ENCODE measurements at regions of chr16 and their contacts with region 1.

Region 1: GRCh38 chr16:23678430-23679273 is at the start of gene PLK1:
- DNase-seq: peak; percentile 97
- H3K4me3 ChIP-seq: peak within 1 kb of the TSS; percentile 88
- H3K27ac ChIP-seq: peak within 1 kb of the TSS; percentile 89
- H3K4me1 ChIP-seq: peaks cover 27% of the 10 kb centered on the region
- H3K27me3 ChIP-seq: no peaks in the 10 kb centered on the region
- CTCF ChIP-seq: peak; percentile 55
- total RNA-seq, gene PLK1: 227 and 234 TPM in 2 replicates

Region 2: DNA sequence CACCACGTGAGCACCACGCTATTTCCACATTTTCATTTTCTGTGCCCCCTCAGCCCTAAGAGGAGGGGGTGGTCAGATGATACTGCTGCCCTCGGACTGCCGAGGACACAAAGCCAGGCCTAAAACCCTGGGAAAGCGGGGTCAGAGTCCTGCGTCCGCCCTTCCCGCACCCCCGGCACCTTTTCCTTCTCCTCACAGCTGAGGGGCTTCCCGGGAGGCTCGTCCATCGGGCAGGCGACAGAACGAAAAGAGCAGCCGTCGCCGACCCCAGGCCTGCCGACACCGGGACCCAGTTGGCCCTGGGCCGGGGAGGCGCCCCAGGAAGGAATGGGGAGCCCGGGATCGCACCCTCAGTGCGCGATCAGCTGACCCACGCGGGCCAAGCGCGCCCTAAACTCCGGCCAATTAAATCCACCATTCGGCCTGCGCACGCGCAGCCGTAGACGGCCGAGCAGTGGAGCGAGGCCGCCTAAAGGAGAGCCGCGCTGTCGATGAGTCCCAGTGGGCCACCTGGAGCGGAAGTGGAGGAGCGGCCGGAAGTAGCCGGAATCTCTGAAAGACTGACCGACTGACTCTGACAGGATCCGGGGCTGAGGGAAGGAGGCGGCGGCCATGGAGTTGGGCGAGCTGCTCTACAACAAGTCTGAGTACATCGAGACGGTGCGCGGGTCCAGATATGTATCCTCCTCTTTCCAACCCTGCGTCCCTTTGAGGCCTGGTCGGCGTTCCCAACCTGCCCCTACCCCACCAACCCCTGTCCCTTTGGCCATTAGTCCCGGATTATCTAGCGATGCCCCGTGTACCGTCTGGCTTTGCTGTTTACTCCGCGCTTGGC is 37.5 kb before region 1 on chr16 and contains the starts of genes DCTN5 and PALB2:
- CTCF ChIA-PET with region 1: no interaction called
- POLR2A ChIA-PET with region 1: no interaction called
- intact Hi-C with region 1: loop called (anchors 2 kb)
- DNase-seq: peak; percentile 97
- H3K4me3 ChIP-seq: peak within 1 kb of the TSS; percentile 99
- H3K27ac ChIP-seq: peak within 1 kb of the TSS; percentile 87
- H3K4me1 ChIP-seq: peaks cover 14% of the 10 kb centered on the region
- H3K27me3 ChIP-seq: no peaks in the 10 kb centered on the region
- CTCF ChIP-seq: no peak
- total RNA-seq, gene DCTN5: 83.2 and 95.1 TPM in 2 replicates
- total RNA-seq, gene PALB2: 23.9 and 27.2 TPM in 2 replicates

Region 3: DNA sequence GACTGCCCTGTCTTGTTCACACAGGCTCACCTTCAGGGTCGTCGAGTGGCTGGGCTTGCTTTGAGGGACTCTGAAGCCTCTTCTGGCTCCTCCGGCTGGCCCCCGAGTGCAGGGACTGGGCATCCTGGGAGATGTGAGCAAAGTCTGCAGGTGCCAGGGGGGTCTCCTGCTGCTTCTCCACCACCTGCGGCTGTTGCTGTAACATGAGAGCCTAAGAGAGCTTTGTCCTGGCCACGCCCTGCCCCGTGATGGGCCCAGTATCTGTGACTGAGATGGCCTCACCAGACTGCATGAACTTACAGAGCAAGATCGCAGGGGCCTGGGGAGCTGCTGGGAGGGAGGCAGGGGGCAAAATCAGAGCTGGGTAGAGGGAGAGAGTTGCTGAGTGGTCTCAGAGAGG is 21.9 kb after region 1 on chr16:
- CTCF ChIA-PET with region 1: interaction called, 12 read pairs
- POLR2A ChIA-PET with region 1: no interaction called
- intact Hi-C with region 1: no loop called
- DNase-seq: no peak
- H3K4me3 ChIP-seq: no peak overlapping the region
- H3K27ac ChIP-seq: no peak overlapping the region
- H3K4me1 ChIP-seq: no peaks in the 10 kb centered on the region
- H3K27me3 ChIP-seq: no peaks in the 10 kb centered on the region
- CTCF ChIP-seq: no peak

Region 4: DNA sequence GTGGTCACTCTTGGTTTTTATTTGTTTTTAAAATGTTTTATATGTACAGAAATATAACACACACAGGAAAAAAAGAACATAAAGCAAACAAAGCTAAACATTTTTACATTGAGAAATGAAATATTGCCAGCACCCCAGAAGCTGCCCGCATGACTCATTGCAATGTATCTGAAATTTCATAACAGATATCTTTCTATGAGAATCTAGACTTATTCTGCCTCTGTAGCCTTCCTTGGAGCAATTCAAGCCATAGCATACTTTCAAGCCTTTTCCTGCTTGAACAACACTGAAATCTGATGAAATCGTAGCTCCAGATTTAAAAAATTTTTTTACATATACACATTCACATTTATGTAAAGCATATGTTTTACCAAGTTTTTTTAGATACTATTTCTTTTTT is 947.6 kb after region 1 on chr16:
- CTCF ChIA-PET with region 1: no interaction called
- POLR2A ChIA-PET with region 1: interaction called, 10 read pairs
- intact Hi-C with region 1: no loop called
- DNase-seq: no peak
- H3K4me3 ChIP-seq: no peak overlapping the region
- H3K27ac ChIP-seq: no peak overlapping the region
- H3K4me1 ChIP-seq: no peaks in the 10 kb centered on the region
- H3K27me3 ChIP-seq: no peaks in the 10 kb centered on the region
- CTCF ChIP-seq: no peak

Measured in A673 (cell line).